ENCODE measurements at regions of chr16 and their contacts with region 1.

Region 1: GRCh38 chr16:3264137-3265036 is 8.0 kb upstream of the MEFV start:
- DNase-seq: peak; percentile 98
- H3K4me3 Mint-ChIP-seq: peak overlapping the region; percentile 85
- H3K27ac Mint-ChIP-seq: peak overlapping the region; percentile 94
- H3K4me1 Mint-ChIP-seq: peaks cover 15% of the 10 kb centered on the region
- H3K27me3 Mint-ChIP-seq: no peaks in the 10 kb centered on the region

Region 2: DNA sequence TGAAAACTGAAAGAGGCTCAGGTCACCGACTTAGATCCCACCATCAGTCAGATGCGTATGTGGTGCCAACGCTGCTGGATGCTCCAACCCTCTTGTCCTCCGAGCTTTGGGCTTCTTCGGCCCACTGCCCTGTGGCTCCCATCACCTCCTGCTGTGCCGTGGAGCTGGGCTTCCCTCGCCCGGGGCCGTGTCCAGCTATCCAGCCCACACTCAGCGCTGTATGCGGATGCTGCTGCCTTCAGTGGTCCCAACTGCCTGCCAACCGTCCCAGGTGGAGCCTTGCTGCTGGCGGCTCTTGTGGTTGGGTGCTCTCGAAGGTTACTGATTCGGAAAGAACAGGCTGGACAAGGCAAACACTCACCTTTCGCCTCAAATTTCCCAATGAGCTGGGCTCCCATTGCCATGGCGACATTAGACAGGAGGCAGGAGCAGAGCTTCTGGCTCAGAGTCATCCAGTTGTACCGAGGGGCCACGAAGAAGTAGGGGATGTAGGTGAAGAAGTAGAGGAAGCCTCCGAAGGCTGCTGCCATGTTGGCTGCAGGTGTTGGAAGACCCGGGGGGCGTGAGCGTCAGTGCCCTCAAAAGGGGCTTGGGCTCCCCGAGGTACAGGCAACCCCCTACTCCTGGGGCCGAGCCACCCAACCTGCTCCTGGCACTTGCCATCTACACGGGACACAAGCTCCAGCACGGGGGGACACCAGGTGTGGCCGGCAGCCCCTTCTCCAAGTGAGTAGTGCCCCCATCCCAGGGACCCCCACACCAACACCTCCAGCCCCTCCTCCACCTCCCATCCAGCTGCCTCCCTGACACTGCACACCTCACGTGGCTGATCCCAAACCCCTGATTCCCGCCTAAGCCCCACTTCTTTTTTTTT is 956.1 kb before region 1 on chr16:
- intact Hi-C with region 1: no loop called
- DNase-seq: no peak
- H3K4me3 Mint-ChIP-seq: no peak overlapping the region
- H3K27ac Mint-ChIP-seq: no peak overlapping the region
- H3K4me1 Mint-ChIP-seq: no peaks in the 10 kb centered on the region
- H3K27me3 Mint-ChIP-seq: no peaks in the 10 kb centered on the region

Region 3: GRCh38 chr16:3234543-3235541 is 29.5 kb before region 1 on chr16 and contains the start of gene ZNF200:
- intact Hi-C with region 1: loop called (anchors 1 kb)
- DNase-seq: peak; percentile 98
- H3K4me3 Mint-ChIP-seq: peak within 1 kb of the TSS; percentile 91
- H3K27ac Mint-ChIP-seq: peak within 1 kb of the TSS; percentile 95
- H3K4me1 Mint-ChIP-seq: peaks cover 20% of the 10 kb centered on the region
- H3K27me3 Mint-ChIP-seq: no peaks in the 10 kb centered on the region
- total RNA-seq, gene ZNF200: 13.1 and 13.4 TPM in 2 replicates

Region 4: DNA sequence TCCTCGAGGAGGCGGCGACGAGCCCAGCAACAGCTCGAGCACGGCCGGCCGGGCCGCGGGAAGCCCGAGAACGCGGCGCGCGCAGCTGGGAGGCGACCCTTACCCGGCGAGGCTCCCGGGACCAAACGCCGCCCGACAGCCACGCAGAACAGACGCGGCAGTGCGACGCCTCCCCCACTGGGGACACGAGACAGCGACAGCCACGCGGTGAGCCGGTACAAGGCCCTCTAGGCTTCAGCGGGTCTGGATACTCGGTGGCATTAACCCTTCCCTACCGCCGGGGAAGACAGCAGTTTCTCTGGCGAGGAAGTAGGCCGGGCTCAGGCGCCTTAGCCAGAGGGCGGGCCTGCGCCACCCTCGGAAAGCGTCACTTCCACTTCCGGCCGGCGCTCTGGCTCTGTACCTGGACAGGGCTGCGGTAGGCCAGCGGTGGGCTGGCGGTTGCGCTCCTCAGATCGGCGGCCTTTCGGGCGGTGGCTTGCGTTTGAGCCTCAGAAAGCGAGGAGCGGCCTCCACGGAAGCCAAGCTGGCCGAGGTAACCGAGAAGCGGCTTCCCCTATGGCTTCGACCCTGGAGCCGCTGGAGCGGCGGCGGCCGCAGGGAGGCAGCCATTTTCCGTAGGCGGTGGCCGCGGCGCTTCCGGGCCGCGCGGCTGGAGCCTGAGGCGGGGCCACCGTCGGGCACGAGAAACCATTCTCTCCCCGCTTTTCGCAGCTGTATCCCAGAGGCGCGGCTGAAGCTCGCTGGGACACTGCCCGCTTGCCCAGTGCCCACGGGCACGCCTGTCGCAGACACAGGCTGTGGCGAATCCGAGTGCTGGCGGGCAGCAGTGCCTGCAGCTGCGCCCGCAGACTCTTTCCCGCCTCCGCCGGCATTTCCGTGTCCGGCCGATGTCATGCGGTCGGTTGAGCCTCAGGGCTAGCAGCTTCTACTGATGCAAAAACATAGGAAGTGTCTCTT is 41.0 kb after region 1 on chr16 and contains the starts of genes TIGD7 and ZNF75A:
- intact Hi-C with region 1: loop called (anchors 1 kb)
- DNase-seq: peak; percentile 94
- H3K4me3 Mint-ChIP-seq: peak within 1 kb of the TSS; percentile 80
- H3K27ac Mint-ChIP-seq: peak within 1 kb of the TSS; percentile 79
- H3K4me1 Mint-ChIP-seq: peaks cover 7% of the 10 kb centered on the region
- H3K27me3 Mint-ChIP-seq: no peaks in the 10 kb centered on the region
- total RNA-seq, gene TIGD7: 2.3 and 3.2 TPM in 2 replicates
- total RNA-seq, gene ZNF75A: 26.5 and 33.5 TPM in 2 replicates

Region 5: GRCh38 chr16:3443108-3444031 is 179.0 kb after region 1 on chr16 and contains the starts of genes NAA60 and ZNF597:
- intact Hi-C with region 1: loop called (anchors 1 kb)
- DNase-seq: peak; percentile 94
- H3K4me3 Mint-ChIP-seq: peak within 1 kb of the TSS; percentile 90
- H3K27ac Mint-ChIP-seq: peak within 1 kb of the TSS; percentile 96
- H3K4me1 Mint-ChIP-seq: peaks cover 17% of the 10 kb centered on the region
- H3K27me3 Mint-ChIP-seq: no peaks in the 10 kb centered on the region
- total RNA-seq, gene NAA60: 31.4 and 34.7 TPM in 2 replicates
- total RNA-seq, gene ZNF597: 1.9 and 2.1 TPM in 2 replicates

Region 6: DNA sequence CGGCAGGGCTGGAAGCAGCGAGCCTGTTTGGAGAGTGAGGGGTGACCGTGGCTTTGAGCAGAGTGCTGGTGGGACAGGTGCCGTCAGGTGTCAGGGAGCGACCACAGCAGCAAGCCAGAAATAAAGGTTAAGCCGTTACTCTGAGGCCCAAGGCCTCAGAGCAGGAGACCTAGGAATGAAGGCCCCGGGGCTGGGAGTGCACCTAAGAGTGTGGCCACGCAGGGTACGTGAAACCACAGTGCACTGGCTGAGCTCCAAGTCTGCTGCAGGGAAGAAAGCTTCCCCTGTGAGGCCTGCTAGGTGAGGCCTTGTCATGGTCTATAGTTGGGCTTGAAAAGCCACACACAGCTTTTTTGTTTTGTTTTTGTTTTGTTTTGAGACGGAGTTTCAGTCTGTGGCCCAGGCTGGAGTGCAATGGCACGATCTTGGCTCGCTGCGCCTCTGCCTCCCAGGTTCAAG is 245.1 kb after region 1 on chr16:
- intact Hi-C with region 1: loop called (anchors 2 kb)
- DNase-seq: peak; percentile 93
- H3K4me3 Mint-ChIP-seq: peak overlapping the region; percentile 39
- H3K27ac Mint-ChIP-seq: peak overlapping the region; percentile 76
- H3K4me1 Mint-ChIP-seq: peaks cover 52% of the 10 kb centered on the region
- H3K27me3 Mint-ChIP-seq: no peaks in the 10 kb centered on the region

Measured in activated CD4-positive, alpha-beta T cell treated with anti-CD3 and anti-CD28 coated beads, Interleukin-2, amount 10 ng/mL, durations not matched to agents 24 days and 14 days (primary cell).